ENCODE measurements at regions of chr6 and their contacts with region 1.

Region 1: GRCh38 chr6:40999569-40999968 is 39.5 kb downstream of the UNC5CL start:
- DNase-seq: peak; percentile 53 to 59
- H3K4me3 ChIP-seq: no peak overlapping the region
- H3K27ac ChIP-seq: no peak overlapping the region
- H3K4me1 ChIP-seq: peaks cover 12 to 32% (median 23%) of the 10 kb centered on the region in 4 experiments
- H3K27me3 ChIP-seq: no peaks in the 10 kb centered on the region; a peak in 2 of 7 replicates
- CTCF ChIP-seq: peak; percentile 58 to 83 (median 75)
- EP300 ChIP-seq: no peak
- POLR2A ChIP-seq: no peak
- RAD21 ChIP-seq: peak; percentile 15 to 62; a peak in 3 of 4 replicates

Region 2: DNA sequence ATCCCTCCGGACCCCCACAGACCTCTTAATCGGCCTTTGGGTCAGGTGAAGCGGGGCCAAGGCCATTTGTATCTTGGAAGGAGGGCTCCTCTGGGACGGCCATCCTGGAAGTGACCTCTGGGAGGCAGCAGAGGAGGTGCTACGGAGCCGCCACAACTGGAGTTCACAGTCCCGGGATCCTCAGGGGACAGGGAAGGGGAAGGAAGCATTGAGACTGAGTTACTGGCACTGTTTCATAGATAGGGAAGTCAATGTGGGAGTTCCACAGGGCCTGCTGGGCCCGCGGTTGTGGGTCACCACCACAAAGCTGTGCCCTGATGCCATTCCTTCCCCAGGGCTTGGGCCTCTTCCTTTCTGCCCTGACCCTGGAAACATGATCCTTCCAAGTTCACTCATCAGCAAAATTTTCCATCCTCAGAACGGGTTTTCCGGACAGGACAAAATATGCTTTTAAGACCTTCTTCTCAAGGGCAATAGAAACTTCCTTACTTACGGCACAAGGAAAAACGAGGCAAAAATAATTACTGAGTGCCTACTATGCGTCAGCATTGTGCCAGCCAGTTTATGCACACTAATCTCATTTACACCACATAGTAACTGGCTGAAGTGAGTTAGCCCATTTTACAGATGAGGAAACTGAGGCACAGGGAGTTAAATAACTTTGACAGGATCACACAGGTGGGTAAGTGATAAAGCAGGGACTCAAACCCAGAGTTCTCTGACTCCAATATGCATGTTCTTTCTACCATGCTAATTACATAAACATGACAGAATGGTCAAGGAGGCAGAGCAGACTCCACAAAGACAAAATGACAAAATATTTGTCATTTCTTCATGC is 104.4 kb before region 1 on chr6:
- CTCF ChIA-PET with region 1: interaction called, 10 read pairs
- POLR2A ChIA-PET with region 1: no interaction called
- DNase-seq: peak; percentile 46 to 85
- H3K4me3 ChIP-seq: no peak overlapping the region
- H3K27ac ChIP-seq: no peak overlapping the region
- H3K4me1 ChIP-seq: no peaks in the 10 kb centered on the region
- H3K27me3 ChIP-seq: no peaks in the 10 kb centered on the region; a peak in 2 of 7 replicates
- CTCF ChIP-seq: peak; percentile 81 to 91 (median 83)
- EP300 ChIP-seq: no peak
- POLR2A ChIP-seq: no peak
- RAD21 ChIP-seq: peak; percentile 94 to 95

Region 3: GRCh38 chr6:40988634-40989033 is 10.9 kb before region 1 on chr6:
- CTCF ChIA-PET with region 1: interaction called, 12 read pairs
- POLR2A ChIA-PET with region 1: interaction called, 7 read pairs
- DNase-seq: no peak
- H3K4me3 ChIP-seq: no peak overlapping the region
- H3K27ac ChIP-seq: no peak overlapping the region
- H3K4me1 ChIP-seq: peaks cover 0 to 7% (median 2%) of the 10 kb centered on the region in 4 experiments; a peak in 4 of 7 replicates
- H3K27me3 ChIP-seq: peaks cover 0 to 2% (median 0%) of the 10 kb centered on the region in 4 experiments; a peak in 2 of 7 replicates
- CTCF ChIP-seq: no peak
- EP300 ChIP-seq: no peak
- POLR2A ChIP-seq: no peak
- RAD21 ChIP-seq: no peak